Aorta (tissue), 5 donors: ENCODE measurements at regions of chr17 and their contacts with region 1.

Region 1: GRCh38 chr17:76501018-76501826 is at the start of gene RHBDF2:
- DNase-seq: peak; percentile 94 to 96
- ATAC-seq: peak; percentile 91
- H3K4me3 ChIP-seq: peak within 1 kb of the TSS in 1 of 2 donors; percentile 29
- H3K27ac ChIP-seq: peak within 1 kb of the TSS in 1 of 2 donors; percentile 7
- H3K4me1 ChIP-seq: peaks cover 0 to 1% of the 10 kb centered on the region in 2 donors
- H3K27me3 ChIP-seq: no peaks in the 10 kb centered on the region
- total RNA-seq, gene RHBDF2: 30.9 to 45.0 TPM

Region 2: DNA sequence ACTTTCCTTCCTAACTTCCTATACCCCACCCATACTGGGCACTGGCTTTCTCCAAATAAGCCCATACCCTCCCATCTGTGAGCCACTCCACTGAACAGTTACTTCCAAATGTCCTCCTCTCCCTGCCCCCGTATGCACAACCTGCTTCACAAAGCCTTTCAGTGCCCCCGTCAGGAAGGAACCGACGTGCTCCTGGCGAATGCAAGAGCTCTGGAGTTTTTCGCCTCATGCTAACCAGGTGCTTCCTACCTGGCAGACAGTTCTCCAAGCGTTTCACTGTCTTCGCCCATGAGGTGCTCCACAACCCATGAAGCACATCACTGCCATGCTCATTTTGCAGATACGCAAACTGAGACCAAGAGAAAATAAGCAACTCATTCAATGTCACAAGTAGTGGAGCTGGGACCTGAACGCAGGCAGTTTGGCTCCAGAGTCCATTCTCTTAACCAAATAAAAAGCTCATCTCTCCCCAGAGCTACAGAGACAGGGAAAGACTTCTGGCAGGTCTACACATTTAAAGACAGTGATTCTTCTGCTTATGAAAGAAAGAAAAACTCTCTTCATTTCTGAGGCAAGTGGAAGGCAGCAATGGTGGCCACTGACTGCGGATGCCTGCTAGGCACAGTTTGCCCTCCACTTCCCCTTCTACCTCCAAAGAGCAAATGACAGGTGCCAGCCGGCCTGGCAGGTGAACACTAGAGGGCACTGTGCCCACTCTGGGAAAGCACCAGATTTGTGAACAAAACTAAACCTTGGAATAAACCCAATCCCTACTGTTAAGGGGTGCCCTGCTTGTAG is 93.0 kb before region 1 on chr17:
- intact Hi-C with region 1: loop called (anchors 2 to 5 kb)
- DNase-seq: peak in 1 of 2 donors; percentile 81
- ATAC-seq: no peak
- H3K4me3 ChIP-seq: no peak overlapping the region
- H3K27ac ChIP-seq: no peak overlapping the region
- H3K4me1 ChIP-seq: no peaks in the 10 kb centered on the region
- H3K27me3 ChIP-seq: no peaks in the 10 kb centered on the region